AG04449 (cell line): ENCODE measurements at regions of chr5 and their contacts with region 1.

Region 1: GRCh38 chr5:112757468-112758208 is 20.0 kb downstream of the APC start:
- DNase-seq: no peak
- H3K4me3 ChIP-seq: no peak overlapping the region
- CTCF ChIP-seq: peak; percentile 56

Region 2: DNA sequence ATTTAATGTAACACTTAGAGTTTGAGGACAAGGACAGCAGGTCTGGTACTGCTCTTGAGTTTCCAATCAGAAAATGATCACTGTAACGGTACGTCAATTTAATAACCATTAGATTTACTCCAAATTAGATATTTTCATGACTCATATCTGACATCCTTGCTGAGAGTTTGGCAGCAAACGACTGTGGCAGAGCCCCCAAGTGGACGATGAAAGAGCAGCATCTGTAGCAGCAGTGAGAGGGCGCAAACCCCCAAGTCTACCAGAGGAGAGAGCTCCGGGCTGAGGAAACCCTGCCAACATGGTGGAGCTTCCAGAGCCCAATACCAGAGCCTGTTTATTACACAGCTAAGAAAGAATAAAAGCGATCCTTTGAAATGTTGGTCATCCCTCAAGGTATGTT is 265.3 kb before region 1 on chr5:
- CTCF ChIA-PET with region 1: interaction called, 14 read pairs
- POLR2A ChIA-PET with region 1: no interaction called
- DNase-seq: peak; percentile 44
- H3K4me3 ChIP-seq: no peak overlapping the region
- CTCF ChIP-seq: peak; percentile 83

Region 3: GRCh38 chr5:112707187-112708102 is 50.2 kb before region 1 on chr5:
- CTCF ChIA-PET with region 1: interaction called, 11 read pairs
- POLR2A ChIA-PET with region 1: no interaction called
- DNase-seq: peak; percentile 88
- H3K4me3 ChIP-seq: peak overlapping the region; percentile 90
- CTCF ChIP-seq: no peak

Region 4: DNA sequence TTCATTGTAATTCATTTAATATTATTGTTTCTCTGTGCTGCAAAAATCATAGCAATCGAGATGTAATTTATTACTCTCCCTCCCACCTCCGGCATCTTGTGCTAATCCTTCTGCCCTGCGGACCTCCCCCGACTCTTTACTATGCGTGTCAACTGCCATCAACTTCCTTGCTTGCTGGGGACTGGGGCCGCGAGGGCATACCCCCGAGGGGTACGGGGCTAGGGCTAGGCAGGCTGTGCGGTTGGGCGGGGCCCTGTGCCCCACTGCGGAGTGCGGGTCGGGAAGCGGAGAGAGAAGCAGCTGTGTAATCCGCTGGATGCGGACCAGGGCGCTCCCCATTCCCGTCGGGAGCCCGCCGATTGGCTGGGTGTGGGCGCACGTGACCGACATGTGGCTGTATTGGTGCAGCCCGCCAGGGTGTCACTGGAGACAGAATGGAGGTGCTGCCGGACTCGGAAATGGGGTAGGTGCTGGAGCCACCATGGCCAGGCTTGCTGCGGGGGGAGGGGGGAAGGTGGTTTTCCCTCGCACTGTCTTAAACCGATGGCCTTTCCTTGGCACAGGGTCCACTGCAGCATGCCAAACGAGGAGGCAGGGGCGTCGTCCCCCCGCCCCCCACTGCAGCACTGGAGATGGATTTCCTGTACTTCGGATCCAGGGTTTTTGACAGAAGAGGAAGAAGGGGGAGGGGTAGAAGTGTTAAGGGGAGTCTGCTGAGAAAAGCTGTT is 20.0 kb before region 1 on chr5 and contains the start of gene APC:
- CTCF ChIA-PET with region 1: interaction called, 25 read pairs
- POLR2A ChIA-PET with region 1: no interaction called
- DNase-seq: peak; percentile 17
- H3K4me3 ChIP-seq: peak within 1 kb of the TSS; percentile 84
- CTCF ChIP-seq: no peak

Region 5: DNA sequence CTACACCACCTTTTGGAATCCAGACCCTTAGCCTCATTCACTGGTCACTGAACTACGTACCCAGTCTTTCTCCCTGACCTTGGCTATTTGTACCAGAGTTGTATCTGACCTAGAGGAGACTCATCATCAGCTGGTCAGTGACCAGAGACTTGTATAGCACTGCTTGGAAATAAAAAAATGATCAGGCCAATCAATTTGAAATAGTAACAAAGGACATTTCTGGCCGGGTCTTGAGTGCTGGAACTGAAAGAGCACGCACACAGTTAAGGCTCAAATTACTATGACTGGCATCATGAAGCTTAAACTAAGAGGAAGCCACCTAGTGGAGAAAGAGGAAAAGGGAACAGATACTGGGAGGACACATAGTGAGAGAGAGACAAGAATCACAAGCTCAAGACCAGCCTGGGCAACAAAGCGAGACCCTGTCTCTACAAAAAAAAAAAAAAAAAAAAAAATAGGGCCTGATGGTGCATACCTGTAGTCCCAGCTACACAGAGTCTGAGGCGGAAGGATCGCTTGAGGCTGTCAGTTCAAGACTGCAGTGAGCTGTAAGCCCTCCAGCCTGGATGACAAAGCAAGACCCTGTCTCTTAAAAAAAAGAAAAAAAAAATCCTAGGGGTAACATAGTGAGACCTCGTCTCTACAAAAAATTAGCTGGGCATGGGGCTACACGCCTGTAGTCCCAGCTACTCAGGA is 90.6 kb after region 1 on chr5:
- CTCF ChIA-PET with region 1: interaction called, 13 read pairs
- POLR2A ChIA-PET with region 1: no interaction called
- DNase-seq: peak; percentile 26
- H3K4me3 ChIP-seq: peak overlapping the region; percentile 18
- CTCF ChIP-seq: peak; percentile 65

Region 6: GRCh38 chr5:112878760-112879159 is 121.1 kb after region 1 on chr5:
- CTCF ChIA-PET with region 1: no interaction called
- POLR2A ChIA-PET with region 1: no interaction called
- DNase-seq: no peak
- H3K4me3 ChIP-seq: no peak overlapping the region
- CTCF ChIP-seq: no peak

Region 7: DNA sequence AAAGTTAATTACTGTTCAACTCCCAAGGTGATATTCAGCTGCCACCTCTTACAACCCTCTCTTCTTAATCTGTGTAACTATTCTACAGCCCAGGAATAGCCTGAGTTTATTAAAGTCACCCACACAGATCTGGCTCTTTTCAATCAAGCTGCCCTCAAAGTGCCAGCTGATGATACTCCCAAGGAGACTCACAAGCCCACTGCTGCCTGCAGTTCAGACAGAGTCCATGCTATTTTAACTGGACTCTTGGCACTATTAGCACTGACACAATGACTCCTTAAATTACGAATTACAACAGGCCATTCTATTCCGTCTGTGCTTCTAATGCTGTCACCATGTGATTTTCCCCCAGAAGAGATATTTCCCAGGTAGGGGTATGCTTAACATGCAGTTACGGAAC is 138.0 kb after region 1 on chr5:
- CTCF ChIA-PET with region 1: no interaction called
- POLR2A ChIA-PET with region 1: no interaction called
- DNase-seq: no peak
- H3K4me3 ChIP-seq: no peak overlapping the region
- CTCF ChIP-seq: no peak

Region 8: GRCh38 chr5:112958093-112959088 is 200.8 kb after region 1 on chr5:
- CTCF ChIA-PET with region 1: no interaction called
- POLR2A ChIA-PET with region 1: no interaction called
- DNase-seq: peak; percentile 85
- H3K4me3 ChIP-seq: no peak overlapping the region
- CTCF ChIP-seq: no peak